ENCODE measurements at regions of chr3 and their contacts with region 1.

Region 1: GRCh38 chr3:179929091-179929529 is 107.6 kb downstream of the PEX5L start:
- DNase-seq: peak in 7 of 9 donors; percentile 5 to 23 (median 12)
- ATAC-seq: no peak
- H3K4me3 ChIP-seq: no peak overlapping the region
- H3K4me3 Mint-ChIP-seq: no peak overlapping the region
- H3K27ac ChIP-seq: no peak overlapping the region
- H3K27ac Mint-ChIP-seq: no peak overlapping the region
- H3K4me1 ChIP-seq: no peaks in the 10 kb centered on the region
- H3K4me1 Mint-ChIP-seq: peaks cover 0 to 7% (median 0%) of the 10 kb centered on the region in 7 donors
- H3K27me3 ChIP-seq: no peaks in the 10 kb centered on the region
- H3K27me3 Mint-ChIP-seq: peaks cover 8 to 27% (median 15%) of the 10 kb centered on the region in 5 donors

Region 2: DNA sequence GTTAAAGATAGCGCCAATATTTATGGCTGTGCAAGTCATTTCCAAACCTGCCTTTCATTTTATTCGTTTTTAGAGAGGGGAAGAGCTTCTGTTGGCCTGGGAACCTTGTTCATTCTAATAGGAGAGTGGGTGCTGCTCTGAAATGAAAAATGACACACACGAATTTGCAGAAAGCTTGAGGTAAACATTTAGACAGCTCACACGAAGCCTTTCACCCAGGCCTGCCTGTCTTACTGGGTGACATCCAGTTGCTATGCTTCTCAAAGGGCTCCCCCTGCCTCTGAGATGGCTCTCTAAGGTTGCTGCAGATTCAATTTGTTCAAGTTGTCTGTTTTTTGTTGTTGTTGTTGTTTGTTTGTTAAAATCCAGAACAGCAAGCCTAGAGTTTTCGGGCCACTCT is 89.4 kb after region 1 on chr3:
- CTCF ChIA-PET with region 1: no interaction called
- POLR2A ChIA-PET with region 1: no interaction called
- intact Hi-C with region 1: loop called in 1 of 2 experiments (anchors 5 kb)
- DNase-seq: no peak
- ATAC-seq: no peak
- H3K4me3 ChIP-seq: no peak overlapping the region
- H3K4me3 Mint-ChIP-seq: no peak overlapping the region
- H3K27ac ChIP-seq: no peak overlapping the region
- H3K27ac Mint-ChIP-seq: no peak overlapping the region
- H3K4me1 ChIP-seq: no peaks in the 10 kb centered on the region
- H3K4me1 Mint-ChIP-seq: no peaks in the 10 kb centered on the region
- H3K27me3 ChIP-seq: no peaks in the 10 kb centered on the region
- H3K27me3 Mint-ChIP-seq: no peaks in the 10 kb centered on the region

Region 3: GRCh38 chr3:180594631-180595558 is 665.8 kb after region 1 on chr3:
- CTCF ChIA-PET with region 1: no interaction called
- POLR2A ChIA-PET with region 1: no interaction called
- intact Hi-C with region 1: loop called in 1 of 2 experiments (anchors 1 kb)
- DNase-seq: no peak
- ATAC-seq: no peak
- H3K4me3 ChIP-seq: no peak overlapping the region
- H3K4me3 Mint-ChIP-seq: no peak overlapping the region
- H3K27ac ChIP-seq: no peak overlapping the region
- H3K27ac Mint-ChIP-seq: no peak overlapping the region
- H3K4me1 ChIP-seq: no peaks in the 10 kb centered on the region
- H3K4me1 Mint-ChIP-seq: no peaks in the 10 kb centered on the region
- H3K27me3 ChIP-seq: no peaks in the 10 kb centered on the region
- H3K27me3 Mint-ChIP-seq: peaks cover 28 to 53% (median 45%) of the 10 kb centered on the region in 5 donors

Measured in naive thymus-derived CD4-positive, alpha-beta T cell (primary cell).